ENCODE measurements at regions of chr22 and their contacts with region 1.

Region 1: GRCh38 chr22:24338726-24339451 is 68.3 kb downstream of the SPECC1L start:
- DNase-seq: peak; percentile 61
- ATAC-seq: peak; percentile 91
- H3K4me3 ChIP-seq: no peak overlapping the region
- H3K27ac ChIP-seq: no peak overlapping the region
- H3K4me1 ChIP-seq: peaks cover 3% of the 10 kb centered on the region; the same call in 1 of the 2 replicates
- H3K27me3 ChIP-seq: no peaks in the 10 kb centered on the region
- CTCF ChIP-seq: no peak
- POLR2A ChIP-seq: no peak
- RAD21 ChIP-seq: no peak

Region 2: GRCh38 chr22:24200616-24201212 is 138.2 kb before region 1 on chr22:
- CTCF ChIA-PET with region 1: no interaction called
- POLR2A ChIA-PET with region 1: no interaction called
- dilution Hi-C with region 1: no loop called
- in situ Hi-C with region 1: no loop called
- intact Hi-C with region 1: no loop called
- DNase-seq: peak; percentile 51
- ATAC-seq: peak; percentile 50
- H3K4me3 ChIP-seq: no peak overlapping the region
- H3K27ac ChIP-seq: no peak overlapping the region
- H3K4me1 ChIP-seq: peaks cover 5% of the 10 kb centered on the region
- H3K27me3 ChIP-seq: no peaks in the 10 kb centered on the region
- CTCF ChIP-seq: no peak
- POLR2A ChIP-seq: no peak
- RAD21 ChIP-seq: no peak

Region 3: DNA sequence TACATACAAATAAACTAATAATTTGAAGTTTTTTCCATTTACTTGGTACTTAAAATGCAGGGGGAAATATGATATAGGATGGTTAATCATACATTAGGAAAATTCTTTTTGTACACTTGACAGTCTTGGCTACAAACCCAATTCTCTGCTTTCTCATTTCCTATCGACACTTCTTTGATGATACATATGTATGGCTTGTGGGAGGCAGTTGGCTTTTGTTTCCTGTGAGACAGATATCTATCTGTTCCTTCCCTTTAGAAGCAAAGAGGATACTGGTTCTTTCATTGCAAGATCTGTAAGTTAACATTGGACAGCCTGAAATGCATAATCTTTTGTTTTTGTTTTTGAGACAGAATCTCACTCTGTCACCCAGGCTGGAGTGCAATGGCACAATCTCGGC is 40.6 kb after region 1 on chr22:
- CTCF ChIA-PET with region 1: no interaction called
- POLR2A ChIA-PET with region 1: no interaction called
- dilution Hi-C with region 1: no loop called
- in situ Hi-C with region 1: no loop called
- intact Hi-C with region 1: loop called (anchors 5 kb)
- DNase-seq: peak; percentile 56
- ATAC-seq: no peak
- H3K4me3 ChIP-seq: no peak overlapping the region
- H3K27ac ChIP-seq: no peak overlapping the region
- H3K4me1 ChIP-seq: no peaks in the 10 kb centered on the region
- H3K27me3 ChIP-seq: no peaks in the 10 kb centered on the region
- CTCF ChIP-seq: no peak
- POLR2A ChIP-seq: no peak
- RAD21 ChIP-seq: no peak